ENCODE measurements at regions of chr14 and their contacts with region 1.

Region 1: DNA sequence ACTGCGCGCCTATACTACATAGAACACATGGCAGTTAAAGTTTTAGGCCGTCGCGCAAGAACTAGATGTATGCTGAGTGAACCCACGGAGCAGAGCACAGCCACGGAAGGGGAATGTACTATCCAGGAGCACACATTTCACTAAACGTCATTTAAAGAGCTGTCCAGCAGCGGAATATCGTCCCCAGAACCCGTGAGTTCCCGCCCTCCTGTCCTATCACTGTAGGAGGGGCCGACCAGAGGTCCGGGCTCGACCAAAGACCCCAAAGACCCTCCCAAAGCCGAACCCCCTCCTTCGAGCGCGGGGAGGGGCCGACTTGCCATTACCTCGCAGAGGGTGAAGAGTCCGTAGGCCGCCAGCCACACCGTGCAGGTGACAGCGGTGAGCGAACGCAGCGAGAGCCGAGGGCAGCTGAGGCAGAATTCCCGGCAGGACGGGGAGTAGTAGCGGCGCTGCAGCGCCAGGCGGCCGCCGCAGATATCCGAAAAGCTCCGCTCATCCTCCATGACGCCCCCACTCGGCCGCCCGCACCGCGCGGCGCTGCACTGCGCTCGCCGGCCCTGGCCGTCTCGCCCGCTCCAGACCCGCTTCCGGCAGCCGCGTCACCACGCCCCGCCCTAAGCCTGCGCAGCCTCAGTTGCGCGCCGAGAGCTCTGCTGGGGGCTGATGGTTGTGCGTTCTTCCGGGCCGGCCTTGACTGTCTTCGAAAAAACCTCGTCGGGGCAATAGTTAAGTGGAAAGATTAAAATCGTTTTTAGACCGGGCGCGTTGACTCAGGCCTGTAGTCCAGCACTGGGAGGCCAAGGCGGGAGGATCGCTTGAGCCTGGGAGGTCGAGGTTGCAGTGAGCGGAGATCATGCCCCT is at the start of gene PIGH:
- DNase-seq: peak; percentile 91 to 94 (median 92)
- H3K4me3 ChIP-seq: peak within 1 kb of the TSS; percentile 47 to 82
- H3K4me3 Mint-ChIP-seq: peak within 1 kb of the TSS; percentile 93 to 99 (median 98)
- H3K27ac ChIP-seq: peak within 1 kb of the TSS; percentile 72
- H3K27ac Mint-ChIP-seq: peak within 1 kb of the TSS; percentile 90 to 99 (median 98)
- H3K4me1 ChIP-seq: peaks cover 26% of the 10 kb centered on the region
- H3K4me1 Mint-ChIP-seq: peaks cover 23 to 55% (median 41%) of the 10 kb centered on the region in 4 donors
- H3K27me3 ChIP-seq: no peaks in the 10 kb centered on the region
- H3K27me3 Mint-ChIP-seq: peaks cover 0 to 1% of the 10 kb centered on the region in 2 donors
- total RNA-seq, gene PIGH: 28.0 to 35.8 TPM

Region 2: GRCh38 chr14:67359775-67360648 is 239.9 kb before region 1 on chr14 and contains the starts of genes ATP6V1D and EIF2S1:
- CTCF ChIA-PET with region 1: interaction called, 8 read pairs
- POLR2A ChIA-PET with region 1: interaction called, 11 read pairs
- intact Hi-C with region 1: loop called (anchors 1 kb)
- DNase-seq: peak; percentile 99 to 100 (median 100)
- H3K4me3 ChIP-seq: peak within 1 kb of the TSS; percentile 88 to 97
- H3K4me3 Mint-ChIP-seq: peak within 1 kb of the TSS; percentile 96 to 100 (median 100)
- H3K27ac ChIP-seq: peak within 1 kb of the TSS; percentile 90
- H3K27ac Mint-ChIP-seq: peak within 1 kb of the TSS; percentile 92 to 100 (median 99)
- H3K4me1 ChIP-seq: peaks cover 72% of the 10 kb centered on the region
- H3K4me1 Mint-ChIP-seq: peaks cover 44 to 93% (median 70%) of the 10 kb centered on the region in 4 donors
- H3K27me3 ChIP-seq: no peaks in the 10 kb centered on the region
- H3K27me3 Mint-ChIP-seq: no peaks in the 10 kb centered on the region
- total RNA-seq, gene ATP6V1D: 26.8 to 35.0 TPM
- total RNA-seq, gene EIF2S1: 62.0 to 72.1 TPM

Region 3: DNA sequence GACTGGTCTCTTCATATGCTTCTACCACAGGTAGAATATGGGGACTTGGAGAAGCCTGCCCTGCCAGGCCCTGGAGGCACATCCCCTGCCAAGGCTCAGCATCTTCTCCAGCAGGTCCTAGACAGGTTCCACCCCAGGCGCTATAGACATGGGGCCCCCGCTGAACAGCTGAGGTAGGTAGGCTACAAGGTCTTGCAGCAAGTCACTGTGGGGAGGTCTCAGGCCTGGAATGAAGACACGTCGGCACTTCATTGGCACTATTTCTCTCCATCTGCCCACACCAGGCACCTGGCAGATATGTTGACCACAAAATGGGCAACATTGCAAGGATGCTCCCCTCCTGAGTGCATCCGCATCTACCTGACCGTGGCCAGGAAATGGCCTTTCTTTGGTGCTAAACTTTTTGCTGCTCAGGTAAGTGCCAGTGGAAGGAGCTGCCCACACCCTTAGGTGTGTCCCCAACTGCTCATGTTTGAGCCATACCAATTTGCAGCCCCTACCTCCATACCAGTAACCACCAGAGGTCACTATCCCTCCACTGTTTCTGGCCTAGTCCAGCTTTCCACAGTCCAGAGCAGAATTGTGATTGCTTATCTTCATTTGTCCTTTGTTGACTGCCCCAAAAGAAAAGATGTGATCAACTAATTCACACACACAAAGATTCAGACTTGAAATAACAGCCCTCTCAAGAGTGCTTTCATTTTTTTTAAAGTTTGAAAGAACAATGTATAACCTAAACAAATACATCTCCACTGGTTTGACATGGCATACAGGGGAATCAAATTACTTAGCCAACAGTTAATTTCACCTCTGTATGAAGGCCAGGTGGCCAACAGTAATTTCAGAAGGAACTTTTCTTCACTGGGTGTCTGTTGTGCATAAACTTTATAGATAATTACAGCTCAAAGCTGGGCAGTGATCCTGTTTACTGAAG is 16.0 kb before region 1 on chr14:
- CTCF ChIA-PET with region 1: interaction called, 22 read pairs
- POLR2A ChIA-PET with region 1: interaction called, 6 read pairs
- intact Hi-C with region 1: no loop called
- DNase-seq: peak in 4 of 5 donors; percentile 14 to 34 (median 30)
- H3K4me3 ChIP-seq: no peak overlapping the region
- H3K4me3 Mint-ChIP-seq: no peak overlapping the region
- H3K27ac ChIP-seq: no peak overlapping the region
- H3K27ac Mint-ChIP-seq: no peak overlapping the region
- H3K4me1 ChIP-seq: no peaks in the 10 kb centered on the region
- H3K4me1 Mint-ChIP-seq: no peaks in the 10 kb centered on the region
- H3K27me3 ChIP-seq: no peaks in the 10 kb centered on the region
- H3K27me3 Mint-ChIP-seq: no peaks in the 10 kb centered on the region

Region 4: DNA sequence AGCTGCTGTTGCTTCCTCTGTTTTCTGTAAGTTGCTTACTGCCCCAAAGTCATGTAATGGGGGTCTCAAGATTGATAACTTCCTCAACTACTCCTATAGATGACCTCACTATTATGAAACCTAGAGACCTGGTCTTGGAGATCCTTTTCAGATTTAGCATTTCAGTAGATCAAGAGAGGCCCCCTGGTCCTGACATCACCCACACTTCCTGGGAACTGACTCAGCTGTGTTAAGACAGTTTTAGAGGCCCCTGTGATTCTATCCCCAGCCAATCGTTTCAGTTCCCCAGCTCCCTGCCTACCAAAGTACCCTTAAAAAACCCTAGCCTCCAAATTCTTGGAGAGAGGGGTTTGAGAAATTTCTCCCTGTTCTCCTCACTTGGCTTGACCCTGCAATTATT is 10.6 kb after region 1 on chr14:
- CTCF ChIA-PET with region 1: interaction called, 12 read pairs
- POLR2A ChIA-PET with region 1: interaction called, 11 read pairs
- intact Hi-C with region 1: no loop called
- DNase-seq: no peak
- H3K4me3 ChIP-seq: no peak overlapping the region
- H3K4me3 Mint-ChIP-seq: no peak overlapping the region
- H3K27ac ChIP-seq: no peak overlapping the region
- H3K27ac Mint-ChIP-seq: no peak overlapping the region
- H3K4me1 ChIP-seq: no peaks in the 10 kb centered on the region
- H3K4me1 Mint-ChIP-seq: no peaks in the 10 kb centered on the region
- H3K27me3 ChIP-seq: no peaks in the 10 kb centered on the region
- H3K27me3 Mint-ChIP-seq: peaks cover 5 to 13% of the 10 kb centered on the region in 2 donors

Region 5: GRCh38 chr14:67666750-67667449 is 67.0 kb after region 1 on chr14:
- CTCF ChIA-PET with region 1: interaction called, 11 read pairs
- POLR2A ChIA-PET with region 1: interaction called, 6 read pairs
- intact Hi-C with region 1: no loop called
- DNase-seq: peak; percentile 42 to 45 (median 45)
- H3K4me3 ChIP-seq: no peak overlapping the region
- H3K4me3 Mint-ChIP-seq: no peak overlapping the region
- H3K27ac ChIP-seq: no peak overlapping the region
- H3K27ac Mint-ChIP-seq: peak overlapping the region; percentile 6 to 75 (median 61)
- H3K4me1 ChIP-seq: peaks cover 43% of the 10 kb centered on the region
- H3K4me1 Mint-ChIP-seq: peaks cover 32 to 66% (median 51%) of the 10 kb centered on the region in 4 donors
- H3K27me3 ChIP-seq: no peaks in the 10 kb centered on the region
- H3K27me3 Mint-ChIP-seq: no peaks in the 10 kb centered on the region

Region 6: GRCh38 chr14:67695394-67695949 is 95.5 kb after region 1 on chr14 and contains the start of gene RDH11:
- CTCF ChIA-PET with region 1: interaction called, 10 read pairs
- POLR2A ChIA-PET with region 1: interaction called, 21 read pairs
- intact Hi-C with region 1: loop called (anchors 1 kb)
- DNase-seq: peak; percentile 83 to 91 (median 84)
- H3K4me3 ChIP-seq: peak within 1 kb of the TSS; percentile 91 to 94
- H3K4me3 Mint-ChIP-seq: peak within 1 kb of the TSS; percentile 89 to 93 (median 92)
- H3K27ac ChIP-seq: peak within 1 kb of the TSS; percentile 75
- H3K27ac Mint-ChIP-seq: peak within 1 kb of the TSS; percentile 78 to 98 (median 90)
- H3K4me1 ChIP-seq: peaks cover 15% of the 10 kb centered on the region
- H3K4me1 Mint-ChIP-seq: peaks cover 10 to 29% (median 18%) of the 10 kb centered on the region in 4 donors
- H3K27me3 ChIP-seq: no peaks in the 10 kb centered on the region
- H3K27me3 Mint-ChIP-seq: no peaks in the 10 kb centered on the region
- total RNA-seq, gene RDH11: 45.2 to 46.0 TPM

Region 7: GRCh38 chr14:67816326-67817002 is 216.5 kb after region 1 on chr14 and contains the start of gene ZFYVE26:
- CTCF ChIA-PET with region 1: no interaction called
- POLR2A ChIA-PET with region 1: interaction called, 4 read pairs
- intact Hi-C with region 1: loop called (anchors 5 kb)
- DNase-seq: peak; percentile 87 to 95 (median 88)
- H3K4me3 ChIP-seq: peak within 1 kb of the TSS; percentile 54 to 86
- H3K4me3 Mint-ChIP-seq: peak within 1 kb of the TSS; percentile 89 to 99 (median 96)
- H3K27ac ChIP-seq: peak within 1 kb of the TSS; percentile 47
- H3K27ac Mint-ChIP-seq: peak within 1 kb of the TSS; percentile 86 to 98 (median 96)
- H3K4me1 ChIP-seq: peaks cover 38% of the 10 kb centered on the region
- H3K4me1 Mint-ChIP-seq: peaks cover 39 to 61% (median 46%) of the 10 kb centered on the region in 4 donors
- H3K27me3 ChIP-seq: no peaks in the 10 kb centered on the region
- H3K27me3 Mint-ChIP-seq: no peaks in the 10 kb centered on the region
- total RNA-seq, gene ZFYVE26: 35.2 to 38.1 TPM